AG04449 (cell line): ENCODE measurements at regions of chr10 and their contacts with region 1.

Region 1: GRCh38 chr10:118720685-118721538 is 33.9 kb downstream of the CACUL1 start:
- DNase-seq: no peak
- H3K4me3 ChIP-seq: no peak overlapping the region
- CTCF ChIP-seq: peak; percentile 51

Region 2: DNA sequence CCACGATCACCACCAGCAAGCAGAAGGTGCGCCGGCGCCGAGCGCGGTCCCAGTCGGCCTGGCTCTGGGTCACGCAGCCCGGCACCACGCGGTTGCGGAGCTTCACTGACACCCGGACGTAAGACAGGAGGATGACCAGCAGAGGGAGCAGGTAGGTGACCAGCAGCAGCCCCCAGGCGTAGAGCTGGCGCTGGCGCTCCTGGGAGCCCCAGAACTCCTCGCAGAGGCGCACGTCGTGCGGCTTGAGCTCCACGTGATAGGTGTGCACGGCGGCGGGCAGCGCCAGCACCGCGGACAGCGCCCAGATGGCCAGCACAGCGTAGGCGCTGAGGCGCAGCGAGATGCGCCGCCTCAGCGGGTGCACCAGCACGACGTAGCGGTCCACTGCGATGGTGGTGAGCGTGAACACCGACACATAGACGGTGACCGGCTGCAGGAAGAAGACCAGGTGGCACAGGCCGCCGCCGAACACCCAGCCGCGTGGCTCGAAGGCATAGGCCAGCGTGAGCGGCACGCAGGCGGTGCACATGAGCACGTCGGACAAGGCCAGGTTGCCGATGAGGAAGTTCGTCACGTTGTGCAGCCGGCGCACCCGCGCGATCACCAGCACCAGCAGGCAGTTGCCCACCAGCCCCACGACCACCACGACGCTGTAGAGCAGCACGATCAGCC is 126.4 kb before region 1 on chr10:
- CTCF ChIA-PET with region 1: interaction called, 10 read pairs
- POLR2A ChIA-PET with region 1: no interaction called
- DNase-seq: no peak
- H3K4me3 ChIP-seq: no peak overlapping the region
- CTCF ChIP-seq: peak; percentile 44

Region 3: GRCh38 chr10:118692872-118693271 is 28.0 kb before region 1 on chr10:
- CTCF ChIA-PET with region 1: interaction called, 10 read pairs
- POLR2A ChIA-PET with region 1: no interaction called
- DNase-seq: peak; percentile 79
- H3K4me3 ChIP-seq: no peak overlapping the region
- CTCF ChIP-seq: no peak